HCT116 (cell line): ENCODE measurements at regions of chr4 and their contacts with region 1.

Region 1: GRCh38 chr4:112951362-112952312 is 97.8 kb upstream of the ANK2 start:
- DNase-seq: no peak
- ATAC-seq: no peak
- H3K4me3 ChIP-seq: no peak overlapping the region
- H3K27ac ChIP-seq: no peak overlapping the region
- H3K4me1 ChIP-seq: no peaks in the 10 kb centered on the region
- H3K27me3 ChIP-seq: no peaks in the 10 kb centered on the region
- CTCF ChIP-seq: peak; percentile 32 to 66 (median 49); a peak in 5 of 6 replicates
- POLR2A ChIP-seq: no peak
- RAD21 ChIP-seq: 0 out of 2 replicates have a peak, but pooled peaks have one; percentile 10

Region 2: GRCh38 chr4:112938461-112939058 is 13.1 kb before region 1 on chr4:
- CTCF ChIA-PET with region 1: interaction called, 35 read pairs
- POLR2A ChIA-PET with region 1: no interaction called
- RAD21 ChIA-PET with region 1: no interaction called
- intact Hi-C with region 1: no loop called
- DNase-seq: peak; percentile 31
- ATAC-seq: peak; percentile 59
- H3K4me3 ChIP-seq: no peak overlapping the region
- H3K27ac ChIP-seq: no peak overlapping the region
- H3K4me1 ChIP-seq: no peaks in the 10 kb centered on the region
- H3K27me3 ChIP-seq: no peaks in the 10 kb centered on the region
- CTCF ChIP-seq: peak; percentile 72 to 88 (median 86)
- POLR2A ChIP-seq: no peak
- RAD21 ChIP-seq: peak; percentile 81

Region 3: GRCh38 chr4:113131136-113131535 is 179.5 kb after region 1 on chr4:
- CTCF ChIA-PET with region 1: no interaction called
- POLR2A ChIA-PET with region 1: no interaction called
- RAD21 ChIA-PET with region 1: no interaction called
- intact Hi-C with region 1: no loop called
- DNase-seq: no peak
- ATAC-seq: no peak
- H3K4me3 ChIP-seq: no peak overlapping the region
- H3K27ac ChIP-seq: no peak overlapping the region
- H3K4me1 ChIP-seq: no peaks in the 10 kb centered on the region
- H3K27me3 ChIP-seq: no peaks in the 10 kb centered on the region
- CTCF ChIP-seq: no peak
- POLR2A ChIP-seq: no peak
- RAD21 ChIP-seq: no peak